ENCODE measurements at regions of chr12 and their contacts with region 1.

Region 1: DNA sequence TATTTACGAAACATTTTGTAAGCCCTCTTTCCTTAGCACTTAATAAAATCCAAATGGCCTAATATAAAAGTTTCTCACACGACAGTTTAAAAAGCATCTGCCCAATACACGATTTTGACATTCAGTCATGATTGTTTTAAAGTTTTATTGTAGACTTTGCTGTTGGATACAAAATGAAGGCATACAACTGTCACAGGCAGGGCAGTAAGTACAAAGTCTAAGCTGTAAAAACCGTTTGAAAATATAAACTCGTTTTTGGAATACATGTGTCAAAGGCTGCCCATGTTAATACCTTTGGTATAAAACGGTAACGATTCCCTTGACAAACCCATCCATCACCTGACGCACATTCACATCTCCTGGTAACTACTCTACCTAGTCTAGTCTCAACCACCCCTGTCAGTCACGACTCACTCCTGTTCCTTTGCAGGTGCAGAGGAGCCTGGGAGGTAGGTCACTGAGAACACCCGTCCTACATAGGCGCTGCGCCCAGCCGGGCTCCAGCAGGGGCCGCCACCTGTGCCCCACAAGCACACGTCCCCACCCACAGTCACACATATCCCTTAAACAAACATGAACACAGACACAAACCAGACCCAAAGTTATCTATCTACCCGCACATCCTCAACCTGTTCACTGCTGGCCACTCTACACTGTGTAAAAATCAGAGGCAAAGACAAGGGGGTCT is 27.1 kb downstream of the KCTD10 start:
- DNase-seq: no peak
- ATAC-seq: peak; percentile 17 to 61 (median 28)
- H3K4me3 ChIP-seq: no peak overlapping the region
- H3K4me3 Mint-ChIP-seq: peak overlapping the region; percentile 88
- H3K27ac ChIP-seq: peak overlapping the region; percentile 55
- H3K27ac Mint-ChIP-seq: peak overlapping the region; percentile 92 to 93
- H3K4me1 ChIP-seq: peaks cover 61% of the 10 kb centered on the region
- H3K4me1 Mint-ChIP-seq: peaks cover 66 to 69% of the 10 kb centered on the region in 2 donors
- H3K27me3 ChIP-seq: no peaks in the 10 kb centered on the region
- H3K27me3 Mint-ChIP-seq: no peaks in the 10 kb centered on the region
- CTCF ChIP-seq: peak; percentile 14

Region 2: GRCh38 chr12:109428037-109428629 is 21.9 kb before region 1 on chr12:
- intact Hi-C with region 1: loop called (anchors 2 kb)
- DNase-seq: peak; percentile 77 to 85
- ATAC-seq: peak; percentile 88 to 96 (median 93)
- H3K4me3 ChIP-seq: no peak overlapping the region
- H3K4me3 Mint-ChIP-seq: no peak overlapping the region
- H3K27ac ChIP-seq: no peak overlapping the region
- H3K27ac Mint-ChIP-seq: no peak overlapping the region
- H3K4me1 ChIP-seq: peaks cover 7% of the 10 kb centered on the region
- H3K4me1 Mint-ChIP-seq: peaks cover 7 to 9% of the 10 kb centered on the region in 2 donors
- H3K27me3 ChIP-seq: no peaks in the 10 kb centered on the region
- H3K27me3 Mint-ChIP-seq: peaks cover 2 to 9% of the 10 kb centered on the region in 2 donors
- CTCF ChIP-seq: peak; percentile 90

Region 3: DNA sequence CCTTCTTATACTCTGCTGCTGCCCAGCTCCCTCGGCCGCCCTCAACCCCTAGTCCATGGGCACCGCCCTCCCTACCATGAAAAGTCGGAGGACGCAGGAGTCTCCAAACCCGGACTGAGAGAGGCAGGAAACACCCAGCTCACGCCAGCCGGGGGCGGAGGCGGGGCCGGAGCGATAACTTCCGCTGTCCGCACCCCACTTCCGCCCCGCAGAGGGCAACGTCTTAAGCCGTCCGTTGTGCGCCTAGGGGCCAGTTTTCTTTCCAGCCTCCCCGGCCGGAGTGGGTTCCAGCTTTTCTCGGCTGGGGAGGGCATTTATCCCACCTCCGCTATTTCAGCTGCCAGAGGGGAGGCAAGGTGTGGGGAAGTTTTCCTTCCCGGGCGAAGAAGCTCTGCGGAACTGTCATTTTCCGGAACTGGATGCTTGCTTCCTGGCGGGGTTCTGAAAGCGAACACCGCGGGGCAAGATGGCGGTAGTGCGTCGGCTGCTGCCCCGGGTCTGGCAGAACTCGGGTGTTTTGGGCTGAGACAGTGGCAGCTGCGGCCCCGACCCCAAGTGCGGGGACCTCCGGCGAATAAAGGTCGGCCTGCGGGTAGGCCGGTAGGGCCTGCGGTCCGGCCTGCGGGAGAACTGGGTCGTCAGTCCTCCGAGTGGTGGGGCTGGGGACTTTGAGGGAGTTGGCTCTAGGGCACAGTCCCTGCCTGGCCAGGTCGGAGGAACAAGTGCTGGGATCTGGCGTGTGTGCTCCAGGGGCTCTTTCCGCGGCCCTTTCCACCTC is 27.4 kb after region 1 on chr12 and contains the starts of genes KCTD10 and UBE3B:
- intact Hi-C with region 1: loop called (anchors 2 kb)
- DNase-seq: peak; percentile 90 to 94
- ATAC-seq: peak; percentile 93 to 96 (median 94)
- H3K4me3 ChIP-seq: peak within 1 kb of the TSS; percentile 93
- H3K4me3 Mint-ChIP-seq: peak within 1 kb of the TSS; percentile 94
- H3K27ac ChIP-seq: peak within 1 kb of the TSS; percentile 81
- H3K27ac Mint-ChIP-seq: peak within 1 kb of the TSS; percentile 95
- H3K4me1 ChIP-seq: peaks cover 21% of the 10 kb centered on the region
- H3K4me1 Mint-ChIP-seq: peaks cover 50 to 58% of the 10 kb centered on the region in 2 donors
- H3K27me3 ChIP-seq: no peaks in the 10 kb centered on the region
- H3K27me3 Mint-ChIP-seq: no peaks in the 10 kb centered on the region
- CTCF ChIP-seq: no peak
- total RNA-seq, gene KCTD10: 76.0 to 141 (median 79.0) TPM
- total RNA-seq, gene UBE3B: 32.2 to 46.7 (median 39.5) TPM

Measured in natural killer cell (primary cell).